Calu3 (cell line): ENCODE measurements at regions of chr12 and their contacts with region 1.

Region 1: DNA sequence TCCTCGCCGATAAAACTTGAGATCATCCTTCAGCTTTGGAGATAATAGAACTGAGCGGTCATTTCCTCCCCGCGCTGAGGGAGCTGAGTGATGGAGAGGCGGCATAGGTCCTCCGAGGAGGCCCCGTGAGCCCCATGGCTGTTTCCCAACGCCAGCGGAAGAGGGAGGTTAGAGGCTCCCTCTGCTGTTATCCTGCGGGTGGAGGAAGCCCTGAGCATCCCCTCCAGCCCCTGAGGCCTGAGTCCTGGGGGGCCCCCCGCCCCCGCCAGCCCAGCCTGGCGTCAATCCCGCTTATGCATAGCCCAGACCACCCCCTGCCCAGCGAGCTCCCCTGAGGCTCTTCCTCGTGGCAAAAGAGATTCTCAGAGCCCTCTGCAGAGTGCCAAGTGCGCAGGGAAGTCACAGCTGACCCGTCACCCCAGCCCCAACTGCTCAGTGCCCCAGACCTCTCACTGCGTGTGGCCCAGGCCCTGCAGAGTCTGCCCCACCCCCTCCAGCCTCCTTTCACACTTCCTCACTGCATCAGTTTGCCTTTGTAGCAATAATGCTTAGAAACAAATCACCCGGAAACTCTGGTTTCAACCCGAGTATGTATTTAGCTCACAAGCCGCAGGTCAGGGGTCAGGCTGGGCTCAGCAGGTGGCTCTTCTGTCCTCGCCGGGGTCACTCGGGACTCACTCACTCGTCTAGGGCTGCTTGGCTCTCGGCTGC is 44.7 kb upstream of the GALNT9 start:
- DNase-seq: no peak
- H3K4me3 Mint-ChIP-seq: no peak overlapping the region
- H3K27ac Mint-ChIP-seq: no peak overlapping the region
- H3K4me1 Mint-ChIP-seq: no peaks in the 10 kb centered on the region
- H3K27me3 Mint-ChIP-seq: peaks cover 88% of the 10 kb centered on the region
- CTCF ChIP-seq: no peak

Region 2: GRCh38 chr12:131673888-131674257 is 700.2 kb before region 1 on chr12:
- CTCF ChIA-PET with region 1: no interaction called
- intact Hi-C with region 1: no loop called
- DNase-seq: peak; percentile 35
- H3K4me3 Mint-ChIP-seq: no peak overlapping the region
- H3K27ac Mint-ChIP-seq: no peak overlapping the region
- H3K4me1 Mint-ChIP-seq: no peaks in the 10 kb centered on the region
- H3K27me3 Mint-ChIP-seq: peaks cover 93% of the 10 kb centered on the region
- CTCF ChIP-seq: no peak

Region 3: GRCh38 chr12:132067182-132067581 is 306.9 kb before region 1 on chr12:
- CTCF ChIA-PET with region 1: interaction called, 11 read pairs
- intact Hi-C with region 1: no loop called
- DNase-seq: no peak
- H3K4me3 Mint-ChIP-seq: no peak overlapping the region
- H3K27ac Mint-ChIP-seq: no peak overlapping the region
- H3K4me1 Mint-ChIP-seq: no peaks in the 10 kb centered on the region
- H3K27me3 Mint-ChIP-seq: no peaks in the 10 kb centered on the region
- CTCF ChIP-seq: no peak

Region 4: DNA sequence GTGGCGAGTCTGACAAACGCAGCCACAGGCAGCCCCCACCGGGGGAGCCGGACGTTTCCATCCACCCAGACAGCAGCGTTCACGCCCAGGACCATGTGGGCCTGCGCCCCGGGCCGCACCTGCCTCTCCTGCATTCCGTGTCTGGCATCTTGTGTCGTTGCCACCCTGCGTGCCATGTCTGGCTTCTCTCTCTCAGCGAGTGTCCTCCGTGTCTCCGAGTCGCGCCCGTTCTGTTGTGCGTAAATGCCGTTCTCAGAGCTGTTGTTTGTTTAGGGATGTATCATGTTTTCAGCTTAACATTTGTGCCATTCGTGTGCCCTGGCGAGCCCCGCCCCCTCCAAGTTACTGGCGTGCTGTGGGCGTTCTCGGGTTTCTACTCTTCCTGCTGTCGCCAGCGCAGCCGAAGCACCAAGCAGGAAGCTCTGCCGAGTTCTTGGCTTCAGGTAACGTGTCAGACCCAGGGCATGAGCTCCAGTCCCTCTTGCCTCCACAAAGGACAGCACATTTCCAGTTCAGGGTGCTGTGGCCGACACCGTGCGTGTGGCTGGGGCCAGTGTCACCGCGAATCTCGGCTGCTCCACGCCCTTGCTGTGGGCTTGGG is 195.2 kb before region 1 on chr12:
- CTCF ChIA-PET with region 1: no interaction called
- intact Hi-C with region 1: no loop called
- DNase-seq: no peak
- H3K4me3 Mint-ChIP-seq: peak overlapping the region; percentile 39
- H3K27ac Mint-ChIP-seq: no peak overlapping the region
- H3K4me1 Mint-ChIP-seq: no peaks in the 10 kb centered on the region
- H3K27me3 Mint-ChIP-seq: peaks cover 91% of the 10 kb centered on the region
- CTCF ChIP-seq: no peak